ENCODE measurements at regions of chr7 and their contacts with region 1.

Region 1: DNA sequence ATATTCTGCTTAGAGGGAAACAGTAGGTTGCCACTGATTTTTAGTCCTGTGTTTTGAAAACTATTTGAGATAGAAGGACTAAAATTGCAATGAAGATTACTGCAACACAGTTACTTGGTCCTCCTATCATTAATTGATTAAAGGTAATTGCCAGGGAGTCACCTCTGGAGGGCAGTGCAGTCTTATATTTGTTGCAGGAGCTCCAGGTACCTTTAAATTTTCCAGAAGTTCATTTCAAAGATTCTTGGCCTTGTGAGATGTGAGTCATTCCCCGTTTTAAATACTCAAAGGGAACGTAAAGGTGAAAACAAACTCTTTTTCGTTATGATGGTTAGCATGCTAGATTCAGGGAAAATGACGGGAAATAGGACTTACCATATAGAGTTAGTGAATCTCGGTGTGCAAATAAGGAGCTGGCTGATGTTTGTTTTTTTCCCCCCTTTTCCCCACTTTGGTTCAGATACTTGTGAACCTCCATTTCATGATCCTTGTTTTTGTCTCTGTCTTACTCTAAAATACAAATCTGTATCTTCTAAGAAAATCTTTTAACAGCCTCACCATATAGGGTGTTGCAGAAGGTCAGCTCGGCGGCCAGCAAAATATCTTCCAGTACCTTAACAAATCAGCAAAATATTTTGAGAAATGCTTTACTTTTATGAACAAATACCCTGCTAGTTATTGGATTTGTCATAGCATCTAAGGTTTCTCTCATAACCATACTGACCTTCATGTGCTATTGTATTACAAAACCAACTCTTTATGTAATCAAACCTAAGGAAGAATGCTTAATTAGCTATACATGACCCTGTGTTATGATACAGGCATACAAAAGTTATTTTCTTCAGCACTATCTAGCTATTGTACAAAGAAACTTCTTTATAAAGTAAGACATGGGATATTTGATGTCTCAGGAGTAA is 143.0 kb upstream of the HDAC9 start:
- DNase-seq: peak; percentile 72
- H3K27ac ChIP-seq: no peak overlapping the region
- CTCF ChIP-seq: peak; percentile 78

Region 2: DNA sequence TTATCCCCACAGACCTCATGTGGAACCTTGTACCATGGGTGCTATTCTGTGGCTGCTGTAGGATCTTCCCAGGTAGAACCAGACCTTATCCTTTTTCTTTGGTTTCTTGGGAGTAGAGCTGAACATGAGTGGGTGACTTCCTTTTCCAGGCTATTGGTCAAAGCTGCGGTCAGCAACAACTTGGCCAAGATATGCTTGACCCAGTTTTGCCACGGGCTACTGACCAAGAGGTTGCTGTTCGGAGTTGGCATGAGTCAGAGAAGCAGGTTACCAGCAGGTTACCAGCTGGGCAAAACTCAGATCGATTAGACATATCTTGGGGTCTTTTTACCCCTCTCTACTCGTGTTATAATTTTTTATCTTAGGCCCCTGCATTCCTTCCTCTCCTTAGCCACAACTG is 106.2 kb after region 1 on chr7:
- CTCF ChIA-PET with region 1: no interaction called
- POLR2A ChIA-PET with region 1: no interaction called
- DNase-seq: no peak
- H3K27ac ChIP-seq: no peak overlapping the region
- CTCF ChIP-seq: no peak

Region 3: DNA sequence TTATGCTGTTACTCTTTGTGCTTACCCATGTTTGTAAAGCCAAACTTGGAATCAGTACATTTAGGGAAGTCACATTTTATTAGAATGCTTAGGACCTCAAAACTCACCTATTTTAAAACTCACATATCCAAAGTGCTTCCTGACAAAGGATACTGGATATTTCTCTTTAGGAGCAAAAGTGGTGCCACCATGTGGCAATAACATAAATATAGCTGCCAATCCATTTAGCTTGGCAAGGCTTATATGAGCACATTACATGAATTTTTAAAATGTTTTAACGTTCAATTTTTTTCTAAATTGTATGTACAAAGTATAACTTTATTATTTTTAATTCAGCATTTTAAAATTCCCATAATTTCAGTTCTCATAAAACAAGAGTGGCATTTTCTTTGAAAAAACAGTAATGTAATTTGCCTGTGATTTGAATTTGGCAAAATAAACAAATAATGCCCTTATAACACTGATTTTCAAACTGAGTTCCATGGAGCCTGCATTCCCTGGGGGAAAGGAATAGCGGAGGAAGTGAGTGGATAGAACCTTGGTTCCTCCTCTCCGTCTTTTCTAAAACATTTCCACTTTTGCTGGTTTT is 218.4 kb after region 1 on chr7:
- CTCF ChIA-PET with region 1: interaction called, 25 read pairs
- POLR2A ChIA-PET with region 1: no interaction called
- DNase-seq: peak; percentile 44
- H3K27ac ChIP-seq: no peak overlapping the region
- CTCF ChIP-seq: peak; percentile 73